ENCODE measurements at regions of chr4 and their contacts with region 1.

Region 1: DNA sequence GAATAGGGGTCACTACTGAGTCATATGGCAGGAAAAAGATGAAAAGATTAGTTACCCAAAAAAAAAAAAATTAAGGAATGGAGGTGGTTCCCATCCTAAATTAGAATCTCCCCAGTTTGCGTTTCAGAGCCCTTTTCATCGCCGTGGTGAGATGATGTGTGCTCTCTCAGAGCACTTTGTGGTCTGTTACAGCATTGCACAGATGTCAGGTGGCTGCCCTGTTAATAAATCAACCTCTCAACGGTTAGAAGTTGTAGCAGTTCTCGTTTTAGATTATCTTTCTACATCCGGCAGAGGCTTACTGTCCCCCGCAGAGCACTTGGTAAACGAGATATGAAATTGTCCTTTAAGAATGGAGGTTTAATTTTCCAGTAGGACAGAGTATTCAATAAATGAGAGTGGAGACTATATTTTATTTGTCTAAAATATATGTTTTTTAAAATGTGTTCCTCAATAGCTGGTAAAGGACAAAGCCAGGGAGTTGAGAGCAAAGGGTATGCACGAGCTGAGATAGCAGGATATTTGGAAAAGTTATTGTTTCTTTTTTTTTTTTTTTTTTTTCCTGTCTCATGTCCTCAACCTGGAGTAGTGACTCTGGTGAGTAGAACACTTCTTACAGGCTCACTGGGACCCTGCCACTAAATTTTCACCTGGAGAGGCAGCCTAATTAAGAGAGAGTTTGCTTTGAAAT is 26.9 kb downstream of the AFF1 start:
- DNase-seq: peak; percentile 66
- CTCF ChIP-seq: no peak

Region 2: DNA sequence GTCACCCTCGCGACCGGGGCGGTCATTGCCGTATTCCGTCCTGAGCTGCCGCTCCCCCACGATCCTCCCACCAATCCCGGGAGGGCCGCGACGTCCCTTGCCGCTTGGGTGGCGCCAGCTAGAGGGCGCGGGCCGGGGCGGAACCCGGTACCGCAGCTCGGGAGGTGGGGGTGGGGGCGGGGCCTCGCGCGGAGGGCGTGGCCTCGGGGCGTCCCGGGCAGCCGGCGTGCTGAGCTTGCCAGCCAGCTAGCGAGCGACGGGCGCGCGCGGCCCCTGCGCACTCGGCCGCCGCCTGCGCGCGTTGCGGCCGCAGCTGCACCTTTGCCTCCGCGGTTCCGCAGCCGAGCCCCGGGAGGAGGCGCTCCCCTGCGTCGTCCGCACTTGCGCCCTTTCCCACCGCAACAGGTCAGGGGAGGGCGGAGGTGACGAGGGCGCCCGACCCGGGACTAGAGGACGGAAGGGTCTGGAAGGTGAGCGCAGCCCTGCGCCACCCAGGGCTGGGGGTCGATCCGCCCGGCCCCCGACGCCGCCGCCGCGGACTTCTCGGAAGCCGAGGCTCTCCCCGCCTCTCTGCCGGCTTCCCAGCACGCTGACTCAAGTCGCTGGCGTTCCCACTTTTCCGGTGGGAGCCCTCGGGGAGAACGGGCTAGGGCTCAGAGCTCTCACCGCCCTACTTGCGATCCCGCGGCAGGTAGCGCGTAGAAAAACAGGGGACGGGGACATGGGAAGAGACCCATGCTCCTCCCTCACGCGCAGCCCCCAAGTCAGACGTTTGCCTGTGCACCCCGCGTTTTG is 26.8 kb before region 1 on chr4 and contains the start of gene AFF1:
- CTCF ChIA-PET with region 1: interaction called, 52 read pairs
- POLR2A ChIA-PET with region 1: interaction called, 5 read pairs
- DNase-seq: peak; percentile 91
- CTCF ChIP-seq: peak; percentile 55

Region 3: GRCh38 chr4:86947501-86948120 is 14.1 kb before region 1 on chr4:
- CTCF ChIA-PET with region 1: interaction called, 15 read pairs
- POLR2A ChIA-PET with region 1: interaction called, 10 read pairs
- DNase-seq: no peak
- CTCF ChIP-seq: no peak

Region 4: GRCh38 chr4:86999136-86999643 is 37.4 kb after region 1 on chr4:
- CTCF ChIA-PET with region 1: interaction called, 13 read pairs
- POLR2A ChIA-PET with region 1: no interaction called
- DNase-seq: no peak
- CTCF ChIP-seq: no peak

Region 5: DNA sequence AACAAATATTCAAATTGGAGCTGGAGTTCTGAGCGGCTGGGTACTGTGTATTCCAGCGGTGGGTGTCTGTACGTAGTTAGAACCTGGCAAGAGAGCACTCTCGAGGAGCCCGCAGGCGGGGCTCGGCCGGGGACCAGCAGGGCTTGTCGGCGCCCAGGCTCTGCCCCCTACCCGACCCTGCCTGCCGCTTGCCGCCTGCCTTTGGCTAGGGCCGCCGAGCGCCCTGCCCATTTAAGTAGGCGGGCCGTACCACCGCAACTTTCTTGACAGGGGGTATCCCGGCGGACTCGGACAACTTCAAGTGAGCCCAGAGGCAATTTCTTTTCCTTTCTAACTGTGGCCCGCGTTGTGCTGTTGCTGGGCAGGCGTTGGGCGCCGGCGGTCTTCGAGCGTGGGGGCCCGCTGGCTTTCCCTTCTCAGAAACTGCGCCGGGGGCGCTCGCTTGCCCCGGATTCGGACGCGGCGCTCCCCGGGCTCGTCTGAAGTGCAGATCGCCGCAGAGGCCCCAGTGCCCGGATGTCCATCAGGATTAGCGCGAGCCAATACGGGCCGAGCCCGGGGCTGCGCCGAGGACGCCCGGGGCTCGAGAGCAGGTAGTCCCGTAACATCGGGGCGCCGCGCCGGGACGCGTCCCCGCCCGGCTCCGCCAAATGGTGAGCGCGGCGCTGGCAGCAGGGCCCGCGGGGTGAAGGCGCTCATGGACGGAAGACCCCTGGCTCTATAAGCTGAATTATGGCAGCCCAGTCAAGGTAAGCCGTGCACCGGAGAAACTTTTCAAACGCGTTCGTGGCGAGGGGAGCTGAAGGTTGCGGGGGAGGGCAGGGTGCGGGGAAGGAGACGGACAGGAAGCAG is 45.2 kb after region 1 on chr4:
- CTCF ChIA-PET with region 1: interaction called, 5 read pairs
- POLR2A ChIA-PET with region 1: interaction called, 13 read pairs
- DNase-seq: peak; percentile 82
- CTCF ChIP-seq: no peak

Measured in GM10248 (cell line).